ENCODE measurements at regions of chr11 and their contacts with region 1.

Region 1: DNA sequence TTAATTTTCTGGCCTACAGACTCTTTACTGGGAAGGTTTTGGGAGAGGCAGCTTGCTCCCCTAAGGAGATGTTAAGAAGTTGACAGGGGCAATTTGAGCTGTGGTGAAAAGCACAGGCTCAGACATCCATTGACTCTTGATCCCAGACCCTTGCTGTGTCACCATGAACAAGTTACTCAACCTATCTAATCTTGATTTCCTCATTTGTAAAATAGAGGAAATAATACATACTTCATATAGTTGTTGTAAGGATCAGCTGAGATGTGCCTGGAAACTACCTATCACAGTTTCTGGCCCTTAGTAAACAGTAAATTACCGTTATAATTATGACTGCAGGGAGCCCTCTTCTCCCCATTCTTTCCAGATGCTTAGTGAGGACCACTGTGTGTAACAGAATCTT is 16.6 kb upstream of the SCGB1D4 start:
- DNase-seq: no peak
- H3K4me3 Mint-ChIP-seq: no peak overlapping the region
- H3K27ac Mint-ChIP-seq: no peak overlapping the region
- H3K4me1 Mint-ChIP-seq: peaks cover 13% of the 10 kb centered on the region
- H3K27me3 Mint-ChIP-seq: peaks cover 12% of the 10 kb centered on the region

Region 2: DNA sequence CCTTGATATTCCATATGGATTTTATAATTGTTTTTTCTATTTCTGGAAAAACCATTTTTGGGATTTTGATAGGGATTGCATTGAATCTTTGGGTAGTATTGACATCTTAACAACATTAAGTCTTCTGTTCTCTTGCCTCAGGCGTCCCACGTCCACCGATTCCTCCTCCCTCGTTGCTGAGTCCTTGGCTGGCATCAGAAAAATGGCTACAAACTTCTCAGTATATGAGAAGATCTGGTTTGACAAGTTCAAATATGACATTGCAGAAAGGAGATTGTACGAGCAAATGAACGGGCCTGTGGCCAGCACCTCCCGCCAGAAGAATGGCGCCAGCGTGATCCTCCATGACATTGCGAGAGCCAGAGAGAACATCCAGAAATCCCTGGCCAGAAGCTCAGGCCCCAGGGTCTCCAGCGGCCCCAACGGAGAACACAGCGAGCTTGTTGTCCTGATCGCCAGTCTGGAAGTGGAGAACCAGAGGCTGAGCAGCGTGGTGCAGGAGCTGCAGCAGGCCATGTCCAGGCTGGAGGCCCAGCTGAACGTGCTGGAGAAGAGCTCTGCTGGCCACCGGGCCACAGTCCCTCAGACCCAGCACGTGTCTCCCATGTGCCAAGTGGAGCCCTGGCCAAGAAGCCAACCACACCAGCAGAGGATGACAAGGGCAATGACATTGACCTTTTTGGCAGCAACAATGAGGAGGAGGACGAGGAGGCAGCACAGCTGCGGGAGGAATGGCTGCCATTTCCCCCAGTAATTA is 146.2 kb before region 1 on chr11:
- CTCF ChIA-PET with region 1: interaction called, 26 read pairs
- POLR2A ChIA-PET with region 1: interaction called, 7 read pairs
- intact Hi-C with region 1: loop called (anchors 1 kb)
- DNase-seq: no peak
- H3K4me3 Mint-ChIP-seq: no peak overlapping the region
- H3K27ac Mint-ChIP-seq: no peak overlapping the region
- H3K4me1 Mint-ChIP-seq: peaks cover 4% of the 10 kb centered on the region
- H3K27me3 Mint-ChIP-seq: peaks cover 23% of the 10 kb centered on the region

Region 3: GRCh38 chr11:62217191-62217748 is 98.2 kb before region 1 on chr11:
- CTCF ChIA-PET with region 1: interaction called, 8 read pairs
- POLR2A ChIA-PET with region 1: no interaction called
- intact Hi-C with region 1: loop called (anchors 1 kb)
- DNase-seq: no peak
- H3K4me3 Mint-ChIP-seq: no peak overlapping the region
- H3K27ac Mint-ChIP-seq: no peak overlapping the region
- H3K4me1 Mint-ChIP-seq: no peaks in the 10 kb centered on the region
- H3K27me3 Mint-ChIP-seq: peaks cover 6% of the 10 kb centered on the region

Region 4: GRCh38 chr11:62242021-62242420 is 73.4 kb before region 1 on chr11 and contains the start of gene SCGB1D2:
- CTCF ChIA-PET with region 1: interaction called, 13 read pairs
- POLR2A ChIA-PET with region 1: no interaction called
- intact Hi-C with region 1: no loop called
- DNase-seq: no peak
- H3K4me3 Mint-ChIP-seq: no peak within 1 kb of the TSS
- H3K27ac Mint-ChIP-seq: no peak within 1 kb of the TSS
- H3K4me1 Mint-ChIP-seq: no peaks in the 10 kb centered on the region
- H3K27me3 Mint-ChIP-seq: peaks cover 32% of the 10 kb centered on the region
- total RNA-seq, gene SCGB1D2: not detected

Region 5: GRCh38 chr11:62461740-62462507 is 146.5 kb after region 1 on chr11:
- CTCF ChIA-PET with region 1: no interaction called
- POLR2A ChIA-PET with region 1: no interaction called
- intact Hi-C with region 1: no loop called
- DNase-seq: no peak
- H3K4me3 Mint-ChIP-seq: no peak overlapping the region
- H3K27ac Mint-ChIP-seq: no peak overlapping the region
- H3K4me1 Mint-ChIP-seq: peaks cover 4% of the 10 kb centered on the region
- H3K27me3 Mint-ChIP-seq: no peaks in the 10 kb centered on the region

Region 6: DNA sequence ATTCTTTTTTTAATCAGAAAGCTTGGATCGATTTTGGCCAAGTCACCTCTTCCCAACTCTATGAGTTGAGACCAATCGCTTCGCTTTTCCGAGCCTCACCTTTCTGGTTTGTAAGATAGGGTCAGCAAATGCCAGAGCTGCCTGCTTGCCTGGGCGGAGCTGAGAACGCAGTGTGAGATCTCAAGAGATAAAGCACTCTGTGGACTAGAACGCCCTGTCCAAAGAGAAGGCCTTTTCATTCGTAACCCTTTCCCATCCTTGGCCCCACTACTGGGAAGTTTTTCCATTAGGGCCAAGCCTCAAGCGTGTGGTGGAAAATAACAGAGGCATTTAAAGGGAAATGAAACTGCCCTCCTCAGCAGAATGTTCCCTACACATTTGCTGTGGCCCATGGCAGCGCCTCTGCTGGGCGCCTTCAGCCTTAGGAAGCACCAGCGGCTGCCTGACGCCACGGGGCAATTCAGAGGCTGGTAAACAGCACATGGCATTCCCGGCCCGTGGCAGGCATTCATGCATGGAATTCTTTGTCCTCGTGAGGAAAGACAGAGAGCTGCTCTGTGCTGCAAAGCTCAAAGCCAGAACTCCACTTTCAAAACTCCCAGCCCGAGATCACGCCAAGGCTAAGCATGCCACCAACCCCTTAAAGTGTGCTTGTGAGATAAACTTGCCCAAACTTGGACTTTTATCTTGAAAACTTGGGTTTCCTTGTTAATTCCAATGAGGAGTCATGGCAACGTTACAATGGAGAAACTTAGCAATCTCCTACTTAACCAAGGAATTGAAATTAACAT is 193.0 kb after region 1 on chr11:
- CTCF ChIA-PET with region 1: no interaction called
- POLR2A ChIA-PET with region 1: no interaction called
- intact Hi-C with region 1: no loop called
- DNase-seq: no peak
- H3K4me3 Mint-ChIP-seq: no peak overlapping the region
- H3K27ac Mint-ChIP-seq: no peak overlapping the region
- H3K4me1 Mint-ChIP-seq: peaks cover 4% of the 10 kb centered on the region
- H3K27me3 Mint-ChIP-seq: no peaks in the 10 kb centered on the region

Region 7: GRCh38 chr11:62665075-62665598 is 349.7 kb after region 1 on chr11 and contains the starts of genes C11orf98 and CSKMT:
- CTCF ChIA-PET with region 1: no interaction called
- POLR2A ChIA-PET with region 1: no interaction called
- intact Hi-C with region 1: no loop called
- DNase-seq: peak; percentile 97
- H3K4me3 Mint-ChIP-seq: peak within 1 kb of the TSS; percentile 98
- H3K27ac Mint-ChIP-seq: peak within 1 kb of the TSS; percentile 97
- H3K4me1 Mint-ChIP-seq: peaks cover 40% of the 10 kb centered on the region
- H3K27me3 Mint-ChIP-seq: no peaks in the 10 kb centered on the region
- total RNA-seq, gene C11orf98: 107 to 110 TPM
- total RNA-seq, gene CSKMT: 27.7 to 33.9 TPM